ENCODE measurements at regions of chr1 and their contacts with region 1.

Region 1: GRCh38 chr1:34276606-34277005 is 99.9 kb downstream of the C1orf94 start:
- DNase-seq: no peak
- H3K4me3 ChIP-seq: no peak overlapping the region
- CTCF ChIP-seq: no peak

Region 2: GRCh38 chr1:34199927-34200326 is 76.7 kb before region 1 on chr1:
- in situ Hi-C with region 1: loop called (anchors 5 kb)
- DNase-seq: peak; percentile 1
- H3K4me3 ChIP-seq: no peak overlapping the region
- CTCF ChIP-seq: no peak

Region 3: DNA sequence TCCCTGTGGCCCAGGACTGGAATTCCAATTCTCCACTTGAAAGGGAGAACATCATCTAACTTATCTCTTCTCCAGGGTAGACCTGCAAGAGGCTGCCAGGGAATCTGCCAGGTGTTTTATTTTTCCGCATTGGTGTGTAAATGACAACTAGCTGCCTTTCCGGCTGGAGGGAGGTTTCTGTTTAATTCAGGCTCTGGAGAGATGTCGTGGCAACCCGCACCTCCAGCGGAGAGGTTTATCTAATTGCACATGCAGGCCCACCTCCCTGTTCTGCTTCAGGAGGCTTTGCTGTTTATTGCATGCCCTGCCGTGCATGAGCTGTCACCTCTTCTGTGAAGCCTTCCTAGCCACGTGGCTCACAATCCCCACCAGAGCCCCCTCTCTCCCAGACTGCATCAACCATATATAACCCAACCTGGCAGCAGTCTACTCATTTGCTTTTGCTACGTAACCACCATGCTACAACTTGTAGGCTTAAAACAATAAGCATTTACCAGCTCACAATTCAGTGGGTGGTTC is 51.7 kb after region 1 on chr1:
- in situ Hi-C with region 1: no loop called
- DNase-seq: no peak
- H3K4me3 ChIP-seq: no peak overlapping the region
- CTCF ChIP-seq: no peak

Region 4: DNA sequence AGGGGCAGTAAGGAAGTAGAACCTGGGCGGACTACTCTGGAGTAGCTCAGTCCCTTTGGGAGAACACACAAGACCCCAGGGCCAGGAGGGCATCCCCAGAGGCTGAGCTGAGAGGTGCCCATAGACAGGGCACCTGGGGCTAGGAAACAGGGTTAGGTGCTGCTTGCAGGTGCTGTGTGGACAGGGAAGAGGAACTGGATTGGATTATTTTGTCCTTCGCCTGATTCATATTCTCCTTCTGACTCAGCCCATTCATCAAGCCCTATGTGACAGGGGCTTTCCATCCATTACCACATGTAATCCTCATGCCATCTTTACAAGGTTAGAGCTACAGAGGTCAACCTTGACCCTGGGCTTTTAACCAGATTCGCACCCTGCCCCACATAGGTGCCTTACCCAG is 84.0 kb after region 1 on chr1:
- in situ Hi-C with region 1: no loop called
- DNase-seq: no peak
- H3K4me3 ChIP-seq: no peak overlapping the region
- CTCF ChIP-seq: no peak

Region 5: DNA sequence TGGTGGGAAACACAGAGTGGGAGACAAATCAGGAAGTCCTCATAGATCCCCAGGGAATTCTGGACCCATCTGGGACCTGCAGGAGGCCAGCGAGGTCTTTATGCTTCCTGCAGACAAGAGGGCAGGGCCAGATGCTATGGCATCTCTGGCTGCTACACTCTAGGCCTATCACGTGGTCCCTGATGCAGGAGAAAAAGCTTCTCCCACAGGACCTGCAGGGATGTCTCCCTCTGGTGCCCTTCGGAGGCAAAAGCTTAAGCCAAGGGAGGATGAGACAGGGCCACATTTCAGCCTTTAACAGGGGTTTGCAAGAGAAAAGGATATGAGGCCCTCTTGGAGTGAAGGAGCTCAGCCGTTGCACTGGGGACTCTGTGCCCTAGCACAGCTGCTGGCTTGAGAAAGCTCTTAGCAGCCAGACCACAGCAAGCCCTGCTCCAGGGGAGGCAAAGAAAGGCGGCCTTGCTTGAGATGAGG is 143.1 kb after region 1 on chr1:
- in situ Hi-C with region 1: no loop called
- DNase-seq: no peak
- H3K4me3 ChIP-seq: no peak overlapping the region
- CTCF ChIP-seq: peak; percentile 23